GM23248 (cell line): ENCODE measurements at regions of chr6 and their contacts with region 1.

Region 1: GRCh38 chr6:97394160-97394748 is 111.2 kb upstream of the MMS22L start:
- DNase-seq: peak; percentile 69
- H3K4me3 ChIP-seq: no peak overlapping the region
- H3K27ac ChIP-seq: no peak overlapping the region
- H3K4me1 ChIP-seq: no peaks in the 10 kb centered on the region
- H3K27me3 ChIP-seq: no peaks in the 10 kb centered on the region

Region 2: DNA sequence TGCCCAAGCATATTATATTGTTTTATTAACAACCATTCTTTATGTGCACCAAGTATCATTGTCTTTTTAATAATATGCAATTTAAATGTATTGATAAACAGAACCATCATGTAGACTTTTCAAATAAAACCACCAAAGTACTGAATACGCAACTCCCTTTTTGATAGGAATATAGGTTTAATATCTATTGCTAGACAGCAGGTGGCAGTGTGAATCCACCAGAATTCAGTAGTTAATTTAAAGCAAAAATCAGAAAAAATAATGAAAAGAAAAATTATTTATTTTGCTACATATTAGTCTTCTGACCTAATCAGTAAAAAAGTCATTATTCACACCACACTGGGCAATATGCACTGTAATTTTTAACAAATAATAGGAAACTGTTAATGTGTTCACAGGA is 326.0 kb before region 1 on chr6:
- in situ Hi-C with region 1: loop called (anchors 10 kb)
- DNase-seq: peak; percentile 69
- H3K4me3 ChIP-seq: no peak overlapping the region
- H3K27ac ChIP-seq: no peak overlapping the region
- H3K4me1 ChIP-seq: peaks cover 14% of the 10 kb centered on the region; the same call in 1 of the 2 replicates
- H3K27me3 ChIP-seq: peaks cover 5% of the 10 kb centered on the region

Region 3: GRCh38 chr6:97186416-97186999 is 207.7 kb before region 1 on chr6:
- in situ Hi-C with region 1: loop called (anchors 10 kb)
- DNase-seq: peak; percentile 78
- H3K4me3 ChIP-seq: no peak overlapping the region
- H3K27ac ChIP-seq: no peak overlapping the region
- H3K4me1 ChIP-seq: peaks cover 14% of the 10 kb centered on the region
- H3K27me3 ChIP-seq: no peaks in the 10 kb centered on the region